ENCODE measurements at regions of chr20 and their contacts with region 1.

Region 1: DNA sequence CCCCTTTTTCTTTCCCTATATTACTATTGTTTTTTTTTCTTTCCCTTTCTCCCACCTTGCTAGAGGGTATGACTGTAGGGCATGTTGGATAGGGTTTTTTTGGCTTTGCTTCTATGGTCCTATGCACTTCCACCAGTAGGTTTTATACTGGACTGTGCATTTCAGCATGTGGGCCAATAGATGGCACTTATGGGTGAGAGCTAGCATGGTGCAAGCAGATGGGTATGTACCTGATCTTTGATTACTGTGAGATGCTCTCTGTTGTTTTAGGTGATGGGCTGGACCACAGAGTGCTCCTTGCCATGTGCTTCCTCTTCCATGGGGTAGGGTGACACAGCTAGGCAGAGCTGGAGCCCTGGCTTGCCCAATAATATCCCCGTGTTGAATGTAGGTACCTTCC is 128.5 kb upstream of the CHD6 start:
- DNase-seq: no peak
- H3K4me3 ChIP-seq: no peak overlapping the region
- H3K27ac ChIP-seq: no peak overlapping the region
- H3K4me1 ChIP-seq: no peaks in the 10 kb centered on the region
- H3K27me3 ChIP-seq: peaks cover 0 to 28% (median 0%) of the 10 kb centered on the region in 4 donors
- CTCF ChIP-seq: peak in 1 of 6 experiments; percentile 33
- POLR2A ChIP-seq: no peak

Region 2: GRCh38 chr20:41848201-41848600 is 101.6 kb after region 1 on chr20:
- intact Hi-C with region 1: no loop called
- DNase-seq: no peak
- H3K4me3 ChIP-seq: no peak overlapping the region
- H3K27ac ChIP-seq: no peak overlapping the region
- H3K4me1 ChIP-seq: no peaks in the 10 kb centered on the region
- H3K27me3 ChIP-seq: peaks cover 0 to 16% (median 0%) of the 10 kb centered on the region in 4 donors
- CTCF ChIP-seq: peak in 1 of 6 experiments; percentile 20
- POLR2A ChIP-seq: no peak

Region 3: DNA sequence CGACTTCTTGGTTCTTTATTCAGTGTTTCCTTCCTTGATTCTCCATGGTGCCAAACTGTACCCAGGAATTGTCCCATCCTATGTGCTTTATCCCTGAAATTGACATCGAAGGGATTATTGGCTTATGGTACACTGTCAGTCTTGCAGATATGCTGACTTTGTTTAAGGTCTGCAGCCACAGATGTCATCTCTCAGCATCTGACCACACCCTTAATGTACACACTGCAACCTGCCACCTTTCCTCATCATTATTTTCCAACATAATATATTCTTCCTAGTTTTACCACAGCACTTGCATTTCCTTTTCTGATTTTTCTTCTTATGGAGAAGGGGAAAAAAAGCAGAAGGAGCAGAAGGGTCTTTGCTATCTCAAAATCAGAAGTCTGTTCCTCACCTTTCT is 780.6 kb after region 1 on chr20:
- intact Hi-C with region 1: loop called (anchors 10 kb)
- DNase-seq: no peak
- H3K4me3 ChIP-seq: no peak overlapping the region
- H3K27ac ChIP-seq: no peak overlapping the region
- H3K4me1 ChIP-seq: no peaks in the 10 kb centered on the region
- H3K27me3 ChIP-seq: no peaks in the 10 kb centered on the region
- CTCF ChIP-seq: no peak
- POLR2A ChIP-seq: no peak

Measured in esophagus squamous epithelium (tissue), 5 donors.